ENCODE measurements at regions of chr11 and their contacts with region 1.

Region 1: DNA sequence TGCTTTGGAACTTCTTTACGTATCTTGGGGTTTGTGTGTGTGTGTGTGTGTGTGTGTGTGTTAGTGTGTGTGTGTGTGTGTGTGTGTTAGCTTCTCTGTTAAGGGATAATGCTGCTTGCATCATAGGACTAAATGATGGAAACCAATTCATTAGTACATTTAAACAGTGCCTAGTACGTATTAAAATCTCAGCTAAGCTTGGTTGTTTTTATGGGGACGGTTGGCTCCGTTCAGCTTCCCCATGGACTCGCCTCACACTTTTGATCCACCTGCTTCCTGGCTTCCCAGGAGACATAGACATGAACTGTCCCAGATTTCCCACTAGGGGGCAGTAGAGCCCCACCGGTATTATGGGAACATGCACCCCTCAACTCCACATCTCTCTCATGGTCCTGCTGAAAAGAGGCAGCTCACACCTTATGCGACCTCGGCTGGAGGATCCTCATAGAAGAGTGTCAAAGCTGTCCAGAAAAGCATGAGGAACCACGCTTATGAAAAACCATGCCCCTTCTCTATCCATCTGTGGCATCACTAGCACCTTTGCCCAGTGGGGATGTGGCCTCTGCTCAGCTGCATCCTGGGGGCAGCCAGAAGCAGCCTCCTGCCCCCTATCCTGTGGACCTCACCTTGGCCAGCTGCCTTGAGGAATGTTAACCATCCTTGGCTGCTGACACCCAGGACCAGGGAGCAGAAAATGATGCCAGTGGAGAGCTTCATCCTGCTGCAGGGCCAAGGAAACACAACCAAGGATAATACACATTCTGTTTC is 9.7 kb upstream of the SAAL1 start:
- DNase-seq: peak; percentile 52 to 81 (median 62)
- H3K4me3 ChIP-seq: no peak overlapping the region
- H3K27ac ChIP-seq: no peak overlapping the region
- H3K4me1 ChIP-seq: no peaks in the 10 kb centered on the region
- H3K27me3 ChIP-seq: peaks cover 13% of the 10 kb centered on the region
- CTCF ChIP-seq: peak; percentile 74 to 92 (median 84)
- POLR2A ChIP-seq: no peak

Region 2: DNA sequence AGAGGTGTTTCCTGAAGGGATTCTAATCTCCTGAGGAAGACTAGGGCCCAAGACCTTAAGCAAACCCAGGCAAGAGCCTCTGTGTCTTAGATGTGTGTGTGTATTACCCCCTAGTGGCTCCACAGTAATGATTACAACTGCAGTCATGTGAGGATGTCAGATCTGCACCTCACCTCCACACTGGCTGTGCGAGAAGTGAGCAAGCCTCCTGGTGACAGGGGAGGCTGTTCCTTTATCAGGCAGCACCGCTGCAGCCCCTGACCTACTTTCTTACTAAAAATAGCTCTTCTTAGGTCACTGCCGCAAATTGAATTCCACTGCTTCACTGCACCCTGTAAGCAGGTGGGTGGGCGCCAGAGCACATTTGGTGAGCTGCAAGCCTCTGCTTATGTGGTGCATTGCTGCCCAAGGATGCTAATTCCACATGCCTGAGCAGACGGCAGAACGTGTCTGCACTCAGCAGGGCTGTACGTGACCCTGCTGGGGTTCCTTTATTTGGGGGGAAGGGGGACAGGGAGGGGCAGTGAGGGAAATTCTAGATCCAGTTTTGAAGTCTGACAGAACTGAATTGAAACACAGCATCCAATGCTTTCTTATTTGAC is 268.6 kb before region 1 on chr11:
- intact Hi-C with region 1: no loop called
- DNase-seq: peak in 5 of 7 donors; percentile 18 to 64 (median 31)
- H3K4me3 ChIP-seq: no peak overlapping the region
- H3K27ac ChIP-seq: no peak overlapping the region
- H3K4me1 ChIP-seq: peaks cover 0 to 6% of the 10 kb centered on the region in 2 donors
- H3K27me3 ChIP-seq: no peaks in the 10 kb centered on the region
- CTCF ChIP-seq: peak in 3 of 6 experiments; percentile 10 to 30 (median 10)
- POLR2A ChIP-seq: no peak

Region 3: DNA sequence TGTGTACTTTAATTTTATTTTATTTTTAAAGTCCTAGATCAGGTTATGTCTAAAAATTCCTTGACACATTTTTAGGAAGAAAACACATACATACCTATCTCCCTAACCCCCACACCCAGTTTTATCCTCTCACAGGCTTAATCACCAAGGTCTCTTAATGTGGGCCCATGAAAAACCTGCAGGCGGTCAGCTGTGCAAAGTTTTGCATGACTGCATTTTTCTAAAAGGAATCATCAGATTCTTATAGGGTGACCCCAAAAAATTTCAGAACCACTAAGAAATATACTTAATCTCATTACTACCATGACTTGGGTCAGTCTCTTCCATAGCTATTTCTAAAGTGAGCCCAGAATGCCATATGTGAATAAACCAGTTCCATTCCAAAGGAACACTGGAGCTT is 170.3 kb after region 1 on chr11:
- intact Hi-C with region 1: no loop called
- DNase-seq: no peak
- H3K4me3 ChIP-seq: no peak overlapping the region
- H3K27ac ChIP-seq: no peak overlapping the region
- H3K4me1 ChIP-seq: no peaks in the 10 kb centered on the region
- H3K27me3 ChIP-seq: no peaks in the 10 kb centered on the region
- CTCF ChIP-seq: no peak
- POLR2A ChIP-seq: no peak

Region 4: DNA sequence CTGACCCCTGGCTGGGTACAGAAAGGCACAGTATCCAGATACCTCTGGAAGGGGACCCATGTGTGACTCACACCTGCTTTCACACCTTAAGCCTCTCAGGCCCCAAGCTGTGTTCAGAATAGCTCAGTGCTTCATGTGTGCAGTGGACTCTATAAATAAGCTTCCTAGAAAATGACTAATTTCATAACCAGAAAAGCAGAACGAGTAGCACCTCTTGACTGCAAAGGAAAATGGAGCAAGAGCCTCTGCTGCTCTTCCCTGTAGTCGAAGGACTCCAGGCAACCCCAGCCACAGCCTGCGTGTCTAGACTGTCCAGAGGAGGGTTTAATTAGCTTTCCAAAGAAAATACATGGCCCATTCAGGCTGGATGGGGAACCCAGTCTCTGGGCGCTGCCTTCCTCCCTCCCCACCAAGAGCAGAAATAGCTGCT is 652.9 kb after region 1 on chr11:
- intact Hi-C with region 1: loop called in 1 of 2 experiments (anchors 10 kb)
- DNase-seq: no peak
- H3K4me3 ChIP-seq: no peak overlapping the region
- H3K27ac ChIP-seq: no peak overlapping the region
- H3K4me1 ChIP-seq: no peaks in the 10 kb centered on the region
- H3K27me3 ChIP-seq: no peaks in the 10 kb centered on the region
- CTCF ChIP-seq: no peak
- POLR2A ChIP-seq: no peak